Activated naive CD4-positive, alpha-beta T cell treated with anti-CD3 and anti-CD28 coated beads, Interleukin-2, amount 10 ng/mL, durations not matched to agents 7 days and 5 days (primary cell): ENCODE measurements at regions of chr2 and their contacts with region 1.

Region 1: GRCh38 chr2:239369631-239370161 is 31.1 kb downstream of the HDAC4 start:
- DNase-seq: peak; percentile 90
- H3K4me3 Mint-ChIP-seq: peak overlapping the region; percentile 64
- H3K27ac Mint-ChIP-seq: no peak overlapping the region
- H3K4me1 Mint-ChIP-seq: peaks cover 12% of the 10 kb centered on the region
- H3K27me3 Mint-ChIP-seq: no peaks in the 10 kb centered on the region

Region 2: DNA sequence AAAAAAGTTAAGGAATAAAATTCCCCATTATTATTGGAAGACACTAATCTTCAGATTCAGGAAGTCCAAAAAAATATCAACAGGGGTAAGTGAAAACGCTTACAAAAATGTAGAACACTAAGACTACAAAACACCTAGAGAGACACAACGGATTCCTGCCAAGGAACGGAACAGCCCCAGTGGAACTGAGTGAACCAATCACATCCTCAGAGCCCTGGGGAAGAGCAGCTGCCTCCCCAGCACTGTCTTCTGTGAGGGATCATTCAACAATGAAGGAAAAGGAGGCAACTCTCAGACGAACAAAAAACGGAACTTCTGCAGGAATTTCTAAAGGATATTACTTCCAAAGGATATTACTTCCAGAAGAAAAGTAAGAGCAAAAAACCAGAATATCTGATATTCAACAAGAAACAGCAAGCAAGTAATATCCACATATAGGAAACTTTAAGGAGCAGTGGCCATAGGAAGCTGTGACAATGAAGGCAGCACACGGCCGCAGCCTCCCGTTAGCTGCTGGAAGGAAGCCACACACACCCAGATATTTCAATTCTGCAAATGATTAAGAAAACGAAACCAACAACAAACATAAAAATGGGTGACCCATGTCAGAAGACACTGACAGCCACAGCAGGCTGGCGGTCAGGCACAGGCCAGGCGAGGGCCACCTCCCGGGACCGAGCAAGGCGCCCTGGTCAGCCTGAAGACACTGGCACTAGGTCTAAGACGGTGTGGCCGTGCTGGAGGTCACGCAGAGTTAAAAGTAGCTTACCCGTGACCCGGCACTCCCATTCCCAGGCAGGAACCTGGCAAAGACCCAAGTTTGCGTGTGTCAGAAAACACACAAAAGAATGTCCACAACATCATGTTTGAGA is 50.7 kb before region 1 on chr2:
- CTCF ChIA-PET with region 1: no interaction called
- DNase-seq: peak; percentile 43
- H3K4me3 Mint-ChIP-seq: peak overlapping the region; percentile 74
- H3K27ac Mint-ChIP-seq: peak overlapping the region; percentile 98
- H3K4me1 Mint-ChIP-seq: peaks cover 76% of the 10 kb centered on the region
- H3K27me3 Mint-ChIP-seq: no peaks in the 10 kb centered on the region

Region 3: DNA sequence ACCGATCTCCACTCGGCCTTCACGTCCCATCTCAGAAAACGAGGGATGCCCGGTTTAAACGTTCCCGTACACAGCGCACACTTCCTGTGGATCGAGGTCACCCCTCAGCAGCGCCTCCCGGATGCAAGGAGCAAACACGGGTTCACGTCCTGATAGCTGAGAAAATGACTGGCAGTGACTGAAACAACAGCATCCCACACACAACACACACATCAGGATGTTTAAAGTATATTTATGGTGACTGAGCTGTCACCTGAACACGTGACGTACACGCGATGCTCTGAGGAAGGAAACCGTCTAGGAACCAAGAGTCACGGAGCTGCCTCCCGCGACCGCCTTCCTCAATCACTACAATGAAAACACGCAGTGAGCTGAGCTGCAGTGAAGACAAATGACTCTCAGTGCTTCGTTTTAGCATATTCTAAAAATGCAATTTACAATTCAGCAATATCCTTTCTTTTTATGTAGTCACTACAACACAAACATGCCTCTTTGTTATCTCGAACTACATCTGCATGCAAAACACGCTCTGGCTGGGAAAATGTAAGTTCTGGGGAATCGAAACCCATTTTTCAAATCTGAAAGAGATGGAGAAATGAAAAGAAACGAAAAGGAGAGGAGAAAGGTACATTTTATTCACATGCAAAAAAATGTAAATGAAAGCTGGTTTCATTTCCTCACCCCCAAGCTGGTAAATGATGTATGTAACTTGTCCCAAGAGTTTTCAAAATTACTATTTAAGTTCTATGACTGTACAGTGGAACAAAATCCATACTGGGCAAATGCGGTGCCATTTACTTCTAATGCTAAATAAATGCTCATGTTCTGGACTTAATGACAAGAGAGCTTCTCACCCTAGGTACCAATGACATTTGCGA is 11.4 kb after region 1 on chr2:
- CTCF ChIA-PET with region 1: interaction called, 14 read pairs
- DNase-seq: peak; percentile 80
- H3K4me3 Mint-ChIP-seq: peak overlapping the region; percentile 71
- H3K27ac Mint-ChIP-seq: peak overlapping the region; percentile 98
- H3K4me1 Mint-ChIP-seq: peaks cover 35% of the 10 kb centered on the region
- H3K27me3 Mint-ChIP-seq: no peaks in the 10 kb centered on the region

Region 4: GRCh38 chr2:239399111-239399920 is 29.6 kb after region 1 on chr2:
- CTCF ChIA-PET with region 1: no interaction called
- DNase-seq: peak; percentile 73
- H3K4me3 Mint-ChIP-seq: peak overlapping the region; percentile 90
- H3K27ac Mint-ChIP-seq: peak overlapping the region; percentile 92
- H3K4me1 Mint-ChIP-seq: peaks cover 50% of the 10 kb centered on the region
- H3K27me3 Mint-ChIP-seq: peaks cover 10% of the 10 kb centered on the region

Region 5: GRCh38 chr2:239444626-239445625 is 75.2 kb after region 1 on chr2:
- CTCF ChIA-PET with region 1: no interaction called
- DNase-seq: no peak
- H3K4me3 Mint-ChIP-seq: no peak overlapping the region
- H3K27ac Mint-ChIP-seq: no peak overlapping the region
- H3K4me1 Mint-ChIP-seq: peaks cover 13% of the 10 kb centered on the region
- H3K27me3 Mint-ChIP-seq: peaks cover 68% of the 10 kb centered on the region